ENCODE measurements at regions of chrX and their contacts with region 1.

Region 1: GRCh38 chrX:13418126-13419097 is 98.6 kb upstream of the ATXN3L start:
- DNase-seq: no peak
- H3K4me3 ChIP-seq: no peak overlapping the region
- H3K27ac ChIP-seq: no peak overlapping the region
- H3K4me1 ChIP-seq: peaks cover 0 to 9% (median 0%) of the 10 kb centered on the region in 4 donors
- H3K27me3 ChIP-seq: no peaks in the 10 kb centered on the region
- CTCF ChIP-seq: no peak

Region 2: GRCh38 chrX:13440176-13440575 is 21.8 kb after region 1 on chrX:
- intact Hi-C with region 1: loop called (anchors 2 kb)
- DNase-seq: no peak
- H3K4me3 ChIP-seq: no peak overlapping the region
- H3K27ac ChIP-seq: no peak overlapping the region
- H3K4me1 ChIP-seq: no peaks in the 10 kb centered on the region
- H3K27me3 ChIP-seq: no peaks in the 10 kb centered on the region
- CTCF ChIP-seq: no peak